AG04449 (cell line): ENCODE measurements at regions of chr6 and their contacts with region 1.

Region 1: GRCh38 chr6:56570413-56571359 is 72.0 kb downstream of the DST start:
- DNase-seq: no peak
- H3K4me3 ChIP-seq: no peak overlapping the region
- CTCF ChIP-seq: peak; percentile 49

Region 2: GRCh38 chr6:56314683-56315523 is 255.8 kb before region 1 on chr6:
- CTCF ChIA-PET with region 1: interaction called, 30 read pairs
- POLR2A ChIA-PET with region 1: no interaction called
- DNase-seq: no peak
- H3K4me3 ChIP-seq: no peak overlapping the region
- CTCF ChIP-seq: peak; percentile 75

Region 3: DNA sequence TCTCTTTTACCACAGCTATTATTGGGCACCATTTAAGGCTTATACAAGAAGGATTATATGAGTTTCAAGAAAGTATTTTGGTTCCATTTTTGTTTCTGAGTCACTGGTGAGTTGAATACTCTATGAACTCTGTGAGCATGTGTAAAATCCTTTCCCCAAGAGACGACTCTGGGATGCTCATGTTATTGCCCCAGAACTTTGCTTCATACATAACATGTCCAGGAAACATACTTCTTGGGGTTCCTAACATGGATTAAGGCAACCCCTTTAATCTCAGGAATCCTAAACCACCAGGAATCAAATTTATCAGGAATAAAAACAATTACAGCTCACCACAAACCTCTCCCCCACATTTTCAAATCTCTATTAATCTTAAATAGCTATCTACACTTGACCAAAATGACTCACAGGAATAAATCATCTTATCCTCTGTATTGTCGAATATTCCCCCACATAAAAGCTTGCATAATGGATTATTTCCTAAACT is 205.8 kb before region 1 on chr6:
- CTCF ChIA-PET with region 1: interaction called, 31 read pairs
- POLR2A ChIA-PET with region 1: no interaction called
- DNase-seq: peak; percentile 64
- H3K4me3 ChIP-seq: no peak overlapping the region
- CTCF ChIP-seq: no peak

Region 4: DNA sequence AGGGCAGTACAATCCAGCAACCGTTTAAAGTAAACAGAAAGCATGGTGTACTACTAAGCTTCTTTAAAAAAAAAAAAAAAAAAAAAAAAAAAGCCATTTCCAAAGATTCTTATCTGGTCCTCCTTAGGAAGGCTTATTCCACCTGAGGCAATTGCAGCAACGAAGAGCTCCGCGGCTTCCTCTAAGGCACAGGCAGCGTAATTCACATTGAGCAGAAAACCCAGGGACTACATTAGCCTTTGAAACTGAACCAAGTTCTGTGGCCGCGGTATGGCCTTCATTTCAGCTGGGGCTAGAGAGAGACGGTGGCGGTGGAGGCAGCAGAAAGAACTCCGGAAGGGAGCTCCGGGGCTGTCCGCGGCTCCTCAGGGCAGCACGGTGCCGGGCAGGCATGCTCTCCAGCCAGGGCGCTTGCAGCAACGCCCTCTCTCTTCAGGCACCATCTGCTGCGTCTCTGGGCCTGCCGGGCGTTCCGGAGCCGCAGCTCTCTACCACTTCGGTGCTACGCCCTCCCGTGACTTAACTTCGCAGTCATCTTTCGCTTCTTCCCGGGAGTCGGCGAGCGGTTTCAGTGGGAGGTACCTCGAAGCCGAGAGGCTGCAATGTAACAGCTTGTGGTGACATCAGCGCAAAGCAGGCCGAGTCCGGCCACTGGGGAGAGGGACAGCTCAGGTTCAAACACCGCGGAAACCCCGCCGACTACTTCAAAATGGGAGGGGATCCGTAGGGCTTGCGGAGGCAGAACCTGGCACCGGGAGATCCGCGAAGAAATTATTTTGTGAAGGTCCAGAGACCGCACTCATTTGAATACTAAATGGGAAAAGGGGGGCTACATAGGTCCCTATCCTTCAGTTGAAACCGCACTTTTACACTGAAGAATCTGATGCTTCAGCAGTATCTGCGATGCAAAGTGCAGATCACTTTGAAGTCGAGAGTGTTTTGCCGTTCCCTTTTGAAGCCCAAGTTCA is 28.0 kb before region 1 on chr6:
- CTCF ChIA-PET with region 1: interaction called, 27 read pairs
- POLR2A ChIA-PET with region 1: no interaction called
- DNase-seq: peak; percentile 89
- H3K4me3 ChIP-seq: peak overlapping the region; percentile 63
- CTCF ChIP-seq: peak; percentile 31

Region 5: DNA sequence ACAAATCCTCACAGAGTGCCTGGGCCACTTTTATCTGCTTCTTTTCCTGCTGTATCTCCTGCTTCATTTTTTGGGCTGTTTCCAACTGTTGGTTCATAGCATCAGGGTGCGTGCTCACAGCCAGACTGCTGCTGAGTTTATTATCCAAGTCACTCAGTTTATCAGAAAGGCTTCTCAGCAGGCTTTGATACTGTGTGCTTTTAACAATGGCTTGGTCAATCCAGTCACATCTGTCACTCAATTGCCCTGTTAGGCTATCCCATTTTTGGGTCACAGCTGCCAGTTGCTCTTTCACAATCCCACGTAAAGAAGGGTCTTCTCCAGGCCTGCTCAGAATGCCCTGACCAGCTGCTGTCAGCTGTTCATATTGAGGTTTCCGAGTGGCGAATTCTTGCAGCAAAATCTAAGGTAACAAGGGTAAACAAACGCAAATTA is 15.2 kb before region 1 on chr6:
- CTCF ChIA-PET with region 1: interaction called, 28 read pairs
- POLR2A ChIA-PET with region 1: no interaction called
- DNase-seq: no peak
- H3K4me3 ChIP-seq: no peak overlapping the region
- CTCF ChIP-seq: no peak